Activated B cell treated with CpG ODN at 0.5 μM for 24 hours (primary cell): ENCODE measurements at regions of chr11 and their contacts with region 1.

Region 1: GRCh38 chr11:2992234-2992996 is at the start of gene NAP1L4:
- DNase-seq: peak; percentile 89
- ATAC-seq: peak; percentile 87
- H3K4me3 Mint-ChIP-seq: peak within 1 kb of the TSS; percentile 96
- H3K27ac Mint-ChIP-seq: peak within 1 kb of the TSS; percentile 95
- H3K4me1 Mint-ChIP-seq: peaks cover 42% of the 10 kb centered on the region
- H3K27me3 Mint-ChIP-seq: no peaks in the 10 kb centered on the region
- CTCF ChIP-seq: no peak
- total RNA-seq, gene NAP1L4: 112 and 115 TPM in 2 replicates

Region 2: DNA sequence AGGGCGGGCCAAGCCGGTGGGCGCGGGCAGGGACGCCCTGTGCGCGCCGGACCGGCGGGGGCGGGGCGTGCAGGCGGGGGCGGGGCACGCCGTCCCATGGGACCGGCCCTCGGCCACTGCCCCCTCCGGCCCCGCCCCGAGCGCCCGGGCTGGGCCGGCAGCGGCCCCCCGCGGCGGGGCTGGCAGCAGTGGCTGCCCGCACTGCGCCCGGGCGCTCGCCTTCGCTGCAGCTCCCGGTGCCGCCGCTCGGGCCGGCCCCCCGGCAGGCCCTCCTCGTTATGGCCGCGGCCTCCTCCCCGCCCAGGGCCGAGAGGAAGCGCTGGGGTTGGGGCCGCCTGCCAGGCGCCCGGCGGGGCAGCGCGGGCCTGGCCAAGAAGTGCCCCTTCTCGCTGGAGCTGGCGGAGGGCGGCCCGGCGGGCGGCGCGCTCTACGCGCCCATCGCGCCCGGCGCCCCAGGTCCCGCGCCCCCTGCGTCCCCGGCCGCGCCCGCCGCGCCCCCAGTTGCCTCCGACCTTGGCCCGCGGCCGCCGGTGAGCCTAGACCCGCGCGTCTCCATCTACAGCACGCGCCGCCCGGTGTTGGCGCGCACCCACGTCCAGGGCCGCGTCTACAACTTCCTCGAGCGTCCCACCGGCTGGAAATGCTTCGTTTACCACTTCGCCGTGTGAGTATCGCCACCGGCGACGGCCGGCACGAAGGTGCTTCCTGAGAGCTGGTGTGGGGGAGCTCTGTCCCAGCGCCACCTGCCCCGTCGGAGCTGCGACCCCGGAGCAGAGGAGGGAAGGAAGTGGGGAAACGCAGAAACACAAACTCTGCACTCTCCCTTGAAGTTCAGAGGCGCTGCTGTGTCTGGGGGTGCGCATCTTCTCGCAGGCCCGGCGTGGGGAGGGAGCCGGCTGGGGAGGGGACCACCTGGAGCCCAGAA is 547.3 kb before region 1 on chr11 and contains the start of gene KCNQ1:
- CTCF ChIA-PET with region 1: no interaction called
- POLR2A ChIA-PET with region 1: no interaction called
- intact Hi-C with region 1: loop called (anchors 10 kb)
- DNase-seq: peak; percentile 71
- ATAC-seq: peak; percentile 85
- H3K4me3 Mint-ChIP-seq: peak within 1 kb of the TSS; percentile 85
- H3K27ac Mint-ChIP-seq: peak within 1 kb of the TSS; percentile 65
- H3K4me1 Mint-ChIP-seq: peaks cover 38% of the 10 kb centered on the region
- H3K27me3 Mint-ChIP-seq: no peaks in the 10 kb centered on the region
- CTCF ChIP-seq: no peak
- total RNA-seq, gene KCNQ1: 6.5 and 8.6 TPM in 2 replicates

Region 3: GRCh38 chr11:2837096-2837601 is 155.3 kb before region 1 on chr11:
- CTCF ChIA-PET with region 1: no interaction called
- POLR2A ChIA-PET with region 1: no interaction called
- intact Hi-C with region 1: no loop called
- DNase-seq: no peak
- ATAC-seq: no peak
- H3K4me3 Mint-ChIP-seq: no peak overlapping the region
- H3K27ac Mint-ChIP-seq: no peak overlapping the region
- H3K4me1 Mint-ChIP-seq: no peaks in the 10 kb centered on the region
- H3K27me3 Mint-ChIP-seq: no peaks in the 10 kb centered on the region
- CTCF ChIP-seq: no peak

Region 4: GRCh38 chr11:2901854-2902783 is 90.3 kb before region 1 on chr11:
- CTCF ChIA-PET with region 1: no interaction called
- POLR2A ChIA-PET with region 1: no interaction called
- intact Hi-C with region 1: loop called (anchors 1 kb)
- DNase-seq: peak; percentile 80
- ATAC-seq: peak; percentile 97
- H3K4me3 Mint-ChIP-seq: peak overlapping the region; percentile 80
- H3K27ac Mint-ChIP-seq: peak overlapping the region; percentile 24
- H3K4me1 Mint-ChIP-seq: peaks cover 28% of the 10 kb centered on the region
- H3K27me3 Mint-ChIP-seq: no peaks in the 10 kb centered on the region
- CTCF ChIP-seq: no peak

Region 5: DNA sequence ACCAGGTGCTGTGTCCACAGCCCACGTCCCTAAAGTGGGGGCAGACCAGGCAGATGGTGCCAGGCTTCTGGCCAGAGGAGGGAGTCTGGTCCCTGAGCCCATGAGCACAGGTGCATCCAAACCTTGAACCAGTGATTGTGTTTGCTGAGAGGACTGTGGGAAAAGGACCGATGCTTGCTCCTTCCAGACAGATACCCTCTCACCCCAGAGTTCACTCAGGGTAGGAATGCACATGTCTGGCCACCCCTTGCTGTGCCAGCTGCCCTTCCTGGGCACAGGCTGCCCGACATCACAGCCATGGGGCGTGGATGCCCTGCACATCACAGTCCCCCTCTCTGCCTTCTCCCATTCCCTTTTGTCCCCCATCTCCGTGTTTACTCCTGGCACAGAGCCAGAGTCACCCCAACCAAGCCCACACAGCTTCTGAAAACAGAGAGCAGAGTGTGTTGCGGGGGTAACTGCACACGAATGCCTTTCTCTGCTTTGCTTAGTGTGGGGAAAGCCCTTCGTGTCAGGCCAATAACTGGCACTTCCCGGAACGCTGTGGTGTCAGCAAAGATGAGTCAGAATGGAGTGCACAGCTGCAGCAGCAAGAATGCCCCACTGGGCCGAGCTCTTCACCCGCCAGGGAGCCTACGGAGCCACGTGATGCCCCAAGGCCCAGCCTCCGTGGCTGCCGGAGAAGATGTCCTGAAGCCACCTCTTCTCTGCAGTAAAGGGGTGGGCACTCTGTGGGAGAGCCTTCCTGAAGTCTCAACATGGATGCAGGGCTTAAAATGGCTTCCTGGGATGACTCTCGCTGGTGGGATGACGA is 57.2 kb after region 1 on chr11:
- CTCF ChIA-PET with region 1: no interaction called
- POLR2A ChIA-PET with region 1: interaction called, 13 read pairs
- intact Hi-C with region 1: loop called (anchors 1 kb)
- DNase-seq: peak; percentile 60
- ATAC-seq: peak; percentile 92
- H3K4me3 Mint-ChIP-seq: peak overlapping the region; percentile 80
- H3K27ac Mint-ChIP-seq: peak overlapping the region; percentile 93
- H3K4me1 Mint-ChIP-seq: peaks cover 47% of the 10 kb centered on the region
- H3K27me3 Mint-ChIP-seq: no peaks in the 10 kb centered on the region
- CTCF ChIP-seq: no peak

Region 6: GRCh38 chr11:3378426-3379423 is 386.3 kb after region 1 on chr11 and contains the start of gene ZNF195:
- CTCF ChIA-PET with region 1: no interaction called
- POLR2A ChIA-PET with region 1: interaction called, 3 read pairs
- intact Hi-C with region 1: loop called (anchors 2 kb)
- DNase-seq: peak; percentile 95
- ATAC-seq: peak; percentile 99
- H3K4me3 Mint-ChIP-seq: peak within 1 kb of the TSS; percentile 99
- H3K27ac Mint-ChIP-seq: peak within 1 kb of the TSS; percentile 96
- H3K4me1 Mint-ChIP-seq: peaks cover 45% of the 10 kb centered on the region
- H3K27me3 Mint-ChIP-seq: no peaks in the 10 kb centered on the region
- CTCF ChIP-seq: no peak
- total RNA-seq, gene ZNF195: 48.3 and 54.8 TPM in 2 replicates